Activated naive CD4-positive, alpha-beta T cell treated with anti-CD3 and anti-CD28 coated beads for 36 hours (primary cell): ENCODE measurements at regions of chr7 and their contacts with region 1.

Region 1: DNA sequence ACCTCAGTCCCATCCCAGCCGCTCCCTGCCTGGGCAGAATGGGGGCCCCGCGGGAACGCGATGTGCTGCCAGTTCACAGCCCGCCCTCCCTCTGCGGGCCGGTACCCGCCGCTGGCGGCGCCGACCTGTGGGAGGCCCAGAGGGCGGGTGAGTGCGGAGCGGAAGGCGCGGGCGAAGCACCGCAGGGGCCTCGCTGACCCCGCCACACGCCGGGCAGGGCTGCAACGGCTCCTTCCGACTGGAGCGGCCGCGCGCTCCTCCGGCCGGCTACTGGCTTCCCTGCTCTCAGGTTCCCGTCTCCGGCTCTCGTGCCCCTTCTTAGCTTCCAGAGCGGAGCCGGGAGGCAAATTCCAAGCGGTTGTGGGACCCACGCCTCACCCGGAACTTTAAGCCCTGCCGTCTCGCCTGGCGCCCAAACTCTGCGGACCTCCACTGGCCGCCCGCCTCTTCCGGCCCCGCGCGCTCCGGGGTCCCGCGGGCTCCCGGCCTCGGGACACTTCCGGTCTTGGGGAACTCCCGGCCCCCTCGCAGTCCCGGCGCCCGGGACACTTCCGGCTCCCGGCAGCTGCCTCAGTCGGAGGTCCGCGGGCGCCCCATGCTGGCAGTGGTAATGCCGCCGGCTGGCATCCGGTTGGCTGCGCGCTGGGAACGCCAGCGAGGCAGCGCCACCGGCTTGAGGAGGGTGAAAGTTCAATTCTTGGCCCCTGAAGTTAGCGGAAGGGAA is at the start of gene CYREN:
- DNase-seq: peak; percentile 97
- H3K4me3 Mint-ChIP-seq: peak within 1 kb of the TSS; percentile 89
- H3K27ac Mint-ChIP-seq: peak within 1 kb of the TSS; percentile 95
- H3K4me1 Mint-ChIP-seq: peaks cover 43% of the 10 kb centered on the region
- H3K27me3 Mint-ChIP-seq: no peaks in the 10 kb centered on the region
- total RNA-seq, gene CYREN: 36.7 to 39.0 TPM

Region 2: DNA sequence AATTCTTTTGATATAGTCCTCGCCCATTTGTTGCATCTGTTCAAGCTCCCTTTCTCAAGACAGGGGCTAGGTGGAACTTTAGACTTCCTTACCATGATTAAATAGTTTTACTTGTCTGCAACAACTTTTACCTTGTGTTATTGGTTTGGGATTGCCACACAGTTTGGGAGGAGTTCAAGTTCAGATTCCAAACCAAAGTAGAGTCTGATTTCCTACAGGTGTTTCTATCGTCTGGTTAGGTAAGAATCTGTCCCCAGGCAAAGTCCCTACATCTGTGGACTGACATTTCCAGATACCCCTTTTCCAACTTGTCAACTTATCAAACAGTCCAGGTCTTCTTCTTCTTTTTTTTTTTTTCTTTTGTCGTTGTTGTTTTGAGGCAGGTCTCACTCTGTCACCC is 950.2 kb before region 1 on chr7:
- CTCF ChIA-PET with region 1: no interaction called
- intact Hi-C with region 1: no loop called
- DNase-seq: no peak
- H3K4me3 Mint-ChIP-seq: no peak overlapping the region
- H3K27ac Mint-ChIP-seq: no peak overlapping the region
- H3K4me1 Mint-ChIP-seq: no peaks in the 10 kb centered on the region
- H3K27me3 Mint-ChIP-seq: peaks cover 5% of the 10 kb centered on the region

Region 3: DNA sequence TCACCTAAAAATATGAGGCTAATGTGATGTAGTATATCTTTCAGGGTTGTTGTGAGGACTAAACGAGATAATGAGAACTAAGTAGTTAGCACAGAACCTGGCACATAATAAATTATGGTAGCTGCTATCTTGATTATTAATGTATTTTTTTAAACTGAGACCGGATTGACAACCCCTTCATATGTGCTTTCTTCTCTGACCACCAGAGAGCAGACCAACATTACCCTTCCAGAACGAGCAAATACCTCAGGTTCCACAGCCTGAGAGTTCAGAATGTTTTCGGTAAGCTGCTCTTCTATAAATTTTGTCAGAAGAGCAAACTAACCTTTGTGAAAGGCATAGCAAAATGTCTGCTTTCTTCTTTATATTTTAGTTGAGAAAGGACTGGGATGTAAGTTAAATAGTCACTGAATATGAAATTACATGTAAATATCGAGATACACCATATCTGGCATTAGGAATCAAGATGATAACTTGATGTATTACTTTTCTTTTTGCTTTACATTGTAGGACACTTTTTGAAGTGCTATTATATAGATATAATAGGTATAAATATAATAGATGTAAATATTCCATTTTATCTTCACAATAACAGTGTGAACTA is 537.4 kb before region 1 on chr7:
- CTCF ChIA-PET with region 1: interaction called, 3 read pairs
- intact Hi-C with region 1: loop called (anchors 1 kb)
- DNase-seq: peak; percentile 52
- H3K4me3 Mint-ChIP-seq: no peak overlapping the region
- H3K27ac Mint-ChIP-seq: no peak overlapping the region
- H3K4me1 Mint-ChIP-seq: peaks cover 27% of the 10 kb centered on the region
- H3K27me3 Mint-ChIP-seq: peaks cover 5% of the 10 kb centered on the region

Region 4: GRCh38 chr7:134710859-134711624 is 459.4 kb before region 1 on chr7:
- CTCF ChIA-PET with region 1: no interaction called
- intact Hi-C with region 1: loop called (anchors 1 kb)
- DNase-seq: peak; percentile 84
- H3K4me3 Mint-ChIP-seq: peak overlapping the region; percentile 42
- H3K27ac Mint-ChIP-seq: peak overlapping the region; percentile 91
- H3K4me1 Mint-ChIP-seq: peaks cover 16% of the 10 kb centered on the region
- H3K27me3 Mint-ChIP-seq: no peaks in the 10 kb centered on the region

Region 5: GRCh38 chr7:134943764-134944400 is 226.6 kb before region 1 on chr7:
- CTCF ChIA-PET with region 1: interaction called, 3 read pairs
- intact Hi-C with region 1: loop called (anchors 2 kb)
- DNase-seq: no peak
- H3K4me3 Mint-ChIP-seq: no peak overlapping the region
- H3K27ac Mint-ChIP-seq: no peak overlapping the region
- H3K4me1 Mint-ChIP-seq: peaks cover 18% of the 10 kb centered on the region
- H3K27me3 Mint-ChIP-seq: no peaks in the 10 kb centered on the region

Region 6: GRCh38 chr7:134992626-134993179 is 177.7 kb before region 1 on chr7:
- CTCF ChIA-PET with region 1: interaction called, 44 read pairs
- intact Hi-C with region 1: loop called (anchors 1 kb)
- DNase-seq: peak; percentile 63
- H3K4me3 Mint-ChIP-seq: no peak overlapping the region
- H3K27ac Mint-ChIP-seq: peak overlapping the region; percentile 74
- H3K4me1 Mint-ChIP-seq: peaks cover 67% of the 10 kb centered on the region
- H3K27me3 Mint-ChIP-seq: no peaks in the 10 kb centered on the region

Region 7: DNA sequence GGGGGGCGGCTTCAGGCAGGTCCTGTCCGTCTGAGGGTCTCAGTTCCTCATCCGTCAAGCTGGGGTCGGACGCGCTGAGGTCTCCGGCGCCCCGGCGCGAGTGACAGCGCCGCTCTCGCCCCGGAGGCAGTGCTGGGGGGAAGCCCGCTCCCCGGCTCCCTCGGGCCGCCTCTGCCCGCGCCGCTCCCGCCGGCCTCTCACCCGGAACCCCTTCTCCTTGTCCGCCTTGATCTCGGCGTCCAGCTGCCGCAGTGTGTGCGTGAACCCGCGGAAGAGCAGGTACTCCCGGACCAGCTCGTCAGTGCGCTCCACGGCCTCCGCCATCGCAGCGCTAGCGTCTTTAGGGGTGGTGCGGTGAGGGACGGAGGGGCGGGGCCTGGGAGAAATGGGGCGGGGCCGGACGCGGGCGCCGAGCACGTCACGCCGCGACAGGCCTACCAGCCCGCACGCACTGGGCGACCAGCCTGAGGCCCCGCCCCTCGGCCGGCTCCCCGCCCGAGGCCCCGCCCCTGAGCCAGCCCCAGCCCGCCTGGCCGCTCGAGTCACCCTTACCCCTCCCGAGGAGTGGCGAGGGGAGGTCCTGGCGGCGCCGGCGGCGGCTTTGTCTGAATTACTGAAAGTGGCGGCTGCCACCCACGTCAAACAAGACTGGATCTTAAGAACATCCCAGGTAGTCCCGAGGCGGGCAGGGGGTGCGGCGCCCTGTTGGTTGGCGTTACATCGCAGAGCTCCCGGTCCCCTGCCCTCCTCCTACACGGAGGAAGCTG is 40.9 kb after region 1 on chr7 and contains the start of gene WDR91:
- CTCF ChIA-PET with region 1: interaction called, 10 read pairs
- intact Hi-C with region 1: loop called (anchors 1 kb)
- DNase-seq: peak; percentile 96
- H3K4me3 Mint-ChIP-seq: peak within 1 kb of the TSS; percentile 98
- H3K27ac Mint-ChIP-seq: peak within 1 kb of the TSS; percentile 85
- H3K4me1 Mint-ChIP-seq: peaks cover 41% of the 10 kb centered on the region
- H3K27me3 Mint-ChIP-seq: no peaks in the 10 kb centered on the region
- total RNA-seq, gene WDR91: 10.6 to 11.1 TPM